ENCODE measurements at regions of chr4 and their contacts with region 1.

Region 1: GRCh38 chr4:30828264-30828926 is 108.2 kb downstream of the PCDH7 start:
- DNase-seq: no peak
- H3K4me3 ChIP-seq: no peak overlapping the region
- H3K27ac ChIP-seq: no peak overlapping the region
- H3K27me3 ChIP-seq: no peaks in the 10 kb centered on the region
- CTCF ChIP-seq: no peak

Region 2: DNA sequence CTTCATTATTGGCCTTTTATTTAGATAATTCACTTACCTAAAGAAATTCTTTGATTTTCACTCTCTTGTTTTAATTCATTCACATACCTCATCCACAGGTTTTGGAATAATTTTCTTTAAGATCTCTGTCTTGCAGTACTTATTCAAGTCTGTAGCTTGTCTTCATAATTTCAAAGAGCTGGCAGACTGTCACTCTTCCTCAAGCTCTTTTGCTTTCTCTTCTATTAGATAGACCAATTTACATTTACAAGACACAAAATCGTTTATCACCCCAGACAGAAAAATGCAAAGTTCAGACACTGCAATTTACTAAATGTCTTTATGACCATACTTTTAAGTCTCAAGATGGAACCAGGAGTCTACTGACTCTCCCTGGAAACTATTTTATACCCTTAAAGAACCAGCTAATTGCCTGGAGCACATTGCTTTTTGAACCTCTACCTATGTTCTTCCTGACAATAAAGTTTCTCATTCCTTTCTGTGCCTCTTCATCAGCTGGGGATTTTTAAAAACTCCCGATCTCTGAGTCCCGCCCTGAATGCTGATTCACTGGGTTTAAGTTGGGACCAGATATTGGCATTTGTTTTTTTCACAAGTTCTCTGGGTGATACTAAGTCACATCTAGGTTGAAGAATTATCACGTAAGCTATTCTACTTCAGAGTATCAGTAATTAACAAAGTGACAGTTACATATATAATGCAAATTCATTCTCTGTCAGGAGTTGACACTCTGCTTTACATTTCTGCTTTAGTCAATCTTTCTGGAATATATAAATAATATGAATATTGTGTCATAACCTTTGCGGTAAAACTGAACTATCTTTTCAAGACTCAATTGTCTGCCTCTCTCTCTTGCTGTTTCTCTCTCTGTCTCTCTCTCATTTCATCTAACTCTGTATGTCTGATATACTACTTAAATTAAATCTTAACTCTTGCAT is 88.2 kb after region 1 on chr4:
- intact Hi-C with region 1: loop called in 1 of 2 experiments (anchors 5 kb)
- DNase-seq: no peak
- H3K4me3 ChIP-seq: no peak overlapping the region
- H3K27ac ChIP-seq: no peak overlapping the region
- H3K27me3 ChIP-seq: no peaks in the 10 kb centered on the region
- CTCF ChIP-seq: no peak

Region 3: DNA sequence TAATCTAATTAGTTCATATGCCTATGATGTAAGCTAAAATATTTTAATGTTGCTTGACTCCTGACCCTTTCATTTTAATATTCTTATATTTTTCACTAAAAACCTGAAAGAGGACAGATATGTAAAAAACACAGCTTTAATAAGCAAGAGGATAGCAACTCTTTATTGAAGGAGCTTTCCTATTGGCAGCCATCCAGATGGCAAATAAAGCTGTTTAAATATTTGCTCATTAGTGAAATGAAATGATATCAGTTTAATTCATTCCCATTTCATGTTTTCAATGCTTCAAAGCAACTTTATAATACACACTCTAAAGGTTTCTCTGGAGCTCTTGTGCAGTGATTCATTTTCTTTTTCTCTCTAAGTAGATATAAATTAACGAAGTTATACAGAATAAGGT is 365.1 kb after region 1 on chr4:
- intact Hi-C with region 1: no loop called
- DNase-seq: no peak
- H3K4me3 ChIP-seq: no peak overlapping the region
- H3K27ac ChIP-seq: no peak overlapping the region
- H3K27me3 ChIP-seq: peaks cover 0 to 5% (median 0%) of the 10 kb centered on the region in 45 donors
- CTCF ChIP-seq: no peak

Measured in dorsolateral prefrontal cortex (tissue), 120 donors.